ENCODE measurements at regions of chr2 and their contacts with region 1.

Region 1: DNA sequence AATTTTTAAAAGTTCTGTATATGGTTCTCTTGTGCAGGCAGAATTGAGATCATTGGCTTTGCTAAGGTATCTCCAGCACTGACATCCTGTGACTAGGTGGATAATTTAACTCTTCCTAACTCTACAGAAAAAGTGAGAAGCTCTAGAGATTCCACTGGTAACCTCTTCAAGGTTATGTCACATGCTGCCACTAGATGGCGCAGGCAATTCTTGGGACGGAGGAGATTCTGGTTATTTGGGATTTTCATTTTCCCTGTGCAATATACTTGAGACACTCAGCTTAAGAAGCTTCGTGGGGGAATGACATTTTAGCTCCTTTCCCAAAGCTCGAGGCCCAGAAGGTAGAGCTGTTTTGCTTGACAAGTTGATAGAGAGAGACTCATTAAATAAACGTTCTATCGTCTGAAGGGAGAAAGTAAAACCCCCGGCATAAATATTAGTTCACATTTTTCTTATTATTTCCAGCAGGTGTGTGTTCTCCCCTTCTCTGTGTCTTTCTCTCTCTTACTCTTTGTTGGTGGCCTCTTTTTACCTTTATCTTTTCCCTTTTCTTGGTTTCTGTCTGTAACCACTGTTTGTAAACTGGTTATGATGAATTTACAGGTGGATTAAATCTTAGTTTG is 26.6 kb upstream of the LANCL1 start:
- DNase-seq: no peak
- H3K4me3 ChIP-seq: no peak overlapping the region; the same call in 1 of the 2 replicates
- CTCF ChIP-seq: peak; percentile 72

Region 2: DNA sequence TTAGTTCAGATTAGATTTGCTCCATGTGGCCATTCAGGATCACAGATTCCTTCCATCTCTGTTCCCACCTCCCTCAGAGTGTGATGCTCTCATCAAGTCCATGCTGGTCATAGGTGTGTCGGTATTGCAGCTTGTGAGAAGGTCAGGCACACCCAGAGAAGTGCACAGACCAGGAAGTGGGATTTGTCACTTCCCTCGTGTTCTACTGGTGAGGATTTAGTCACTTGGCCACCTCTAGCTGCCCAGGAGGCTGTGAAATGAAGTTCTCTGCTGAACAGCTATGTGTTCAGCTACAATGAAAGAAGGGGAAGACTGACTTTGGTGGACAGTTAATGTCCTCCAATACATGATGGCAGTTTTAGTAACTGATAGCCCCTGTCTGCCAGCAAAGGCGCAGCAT is 23.0 kb before region 1 on chr2:
- CTCF ChIA-PET with region 1: interaction called, 18 read pairs
- POLR2A ChIA-PET with region 1: no interaction called
- DNase-seq: no peak
- H3K4me3 ChIP-seq: no peak overlapping the region
- CTCF ChIP-seq: no peak

Region 3: DNA sequence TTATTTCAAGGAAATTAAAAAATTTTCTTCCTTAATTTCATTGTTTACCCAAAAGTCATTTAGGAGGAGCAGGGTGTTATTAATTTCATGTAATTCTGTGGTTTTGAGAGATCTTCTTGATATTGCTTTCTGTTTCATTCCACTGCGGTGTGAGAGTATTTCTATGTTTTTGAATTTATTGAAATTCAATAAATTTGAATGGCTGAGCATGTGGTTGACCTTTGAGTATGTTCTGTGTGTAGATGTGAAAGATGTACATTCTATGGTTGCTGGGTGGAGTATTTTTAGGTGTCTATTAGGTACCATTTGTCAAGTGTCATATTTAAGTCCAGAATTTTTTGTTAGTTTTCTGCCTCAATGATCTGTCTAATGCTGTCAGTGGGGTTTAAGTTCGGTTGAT is 12.8 kb after region 1 on chr2:
- CTCF ChIA-PET with region 1: interaction called, 32 read pairs
- POLR2A ChIA-PET with region 1: no interaction called
- DNase-seq: no peak
- H3K4me3 ChIP-seq: no peak overlapping the region
- CTCF ChIP-seq: no peak

Region 4: GRCh38 chr2:210527286-210527685 is 24.2 kb after region 1 on chr2:
- CTCF ChIA-PET with region 1: interaction called, 10 read pairs
- POLR2A ChIA-PET with region 1: no interaction called
- DNase-seq: no peak
- H3K4me3 ChIP-seq: no peak overlapping the region
- CTCF ChIP-seq: no peak

Region 5: DNA sequence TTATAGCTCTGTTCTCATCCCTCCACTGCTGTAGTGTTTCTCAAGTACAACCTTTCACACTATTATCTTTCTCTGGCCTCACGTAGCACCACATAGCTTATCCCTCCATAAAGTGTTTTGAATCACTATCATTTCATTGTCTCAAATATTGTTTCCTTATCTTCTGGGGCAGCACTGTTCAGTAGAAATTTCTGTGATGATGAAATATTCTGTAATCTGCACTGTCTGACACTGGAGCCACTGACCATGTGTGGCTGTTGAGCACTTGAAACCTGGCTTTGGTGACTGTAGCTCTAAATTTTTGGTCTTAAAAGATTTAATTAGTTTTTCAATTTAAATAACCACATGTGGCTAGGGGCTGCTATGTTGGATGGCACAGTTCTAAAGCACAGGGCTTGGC is 132.1 kb after region 1 on chr2:
- CTCF ChIA-PET with region 1: no interaction called
- POLR2A ChIA-PET with region 1: no interaction called
- DNase-seq: no peak
- H3K4me3 ChIP-seq: no peak overlapping the region
- CTCF ChIP-seq: no peak